ENCODE measurements at regions of chr13 and their contacts with region 1.

Region 1: DNA sequence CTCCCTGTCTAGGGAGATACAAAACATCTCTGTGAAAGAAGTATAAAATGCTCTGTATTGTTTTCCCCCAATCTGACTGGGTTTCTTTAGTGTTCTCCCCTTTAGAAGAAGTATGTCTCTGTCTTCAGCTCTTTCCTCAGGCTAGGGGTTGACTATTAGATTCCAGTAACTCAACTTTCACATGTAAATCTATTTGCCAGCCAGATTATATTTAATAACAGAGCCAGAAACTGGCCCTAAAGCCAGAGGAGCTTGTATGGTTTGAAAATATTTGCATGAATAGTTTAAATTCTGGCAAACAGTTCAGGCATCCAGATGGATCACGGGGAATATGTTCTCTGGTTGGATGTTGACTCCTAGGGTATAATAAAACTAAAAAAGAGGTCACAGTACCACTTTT is 22.3 kb upstream of the CYSLTR2 start:
- DNase-seq: no peak
- ATAC-seq: no peak
- H3K4me3 ChIP-seq: no peak overlapping the region
- H3K27ac ChIP-seq: peak overlapping the region in 8 of 12 donors; percentile 9 to 68 (median 48)
- H3K4me1 ChIP-seq: peaks cover 0 to 33% (median 6%) of the 10 kb centered on the region in 12 donors
- H3K27me3 ChIP-seq: no peaks in the 10 kb centered on the region
- CTCF ChIP-seq: no peak
- POLR2A ChIP-seq: no peak

Region 2: GRCh38 chr13:47829690-47830089 is 801.8 kb before region 1 on chr13:
- intact Hi-C with region 1: no loop called
- DNase-seq: no peak
- ATAC-seq: no peak
- H3K4me3 ChIP-seq: no peak overlapping the region
- H3K27ac ChIP-seq: no peak overlapping the region
- H3K4me1 ChIP-seq: peaks cover 0 to 3% (median 0%) of the 10 kb centered on the region in 12 donors
- H3K27me3 ChIP-seq: no peaks in the 10 kb centered on the region
- CTCF ChIP-seq: no peak
- POLR2A ChIP-seq: no peak

Region 3: GRCh38 chr13:48275507-48275906 is 355.9 kb before region 1 on chr13:
- intact Hi-C with region 1: no loop called
- DNase-seq: no peak
- ATAC-seq: no peak
- H3K4me3 ChIP-seq: no peak overlapping the region
- H3K27ac ChIP-seq: no peak overlapping the region
- H3K4me1 ChIP-seq: peaks cover 0 to 9% (median 0%) of the 10 kb centered on the region in 12 donors
- H3K27me3 ChIP-seq: no peaks in the 10 kb centered on the region
- CTCF ChIP-seq: no peak
- POLR2A ChIP-seq: no peak

Region 4: DNA sequence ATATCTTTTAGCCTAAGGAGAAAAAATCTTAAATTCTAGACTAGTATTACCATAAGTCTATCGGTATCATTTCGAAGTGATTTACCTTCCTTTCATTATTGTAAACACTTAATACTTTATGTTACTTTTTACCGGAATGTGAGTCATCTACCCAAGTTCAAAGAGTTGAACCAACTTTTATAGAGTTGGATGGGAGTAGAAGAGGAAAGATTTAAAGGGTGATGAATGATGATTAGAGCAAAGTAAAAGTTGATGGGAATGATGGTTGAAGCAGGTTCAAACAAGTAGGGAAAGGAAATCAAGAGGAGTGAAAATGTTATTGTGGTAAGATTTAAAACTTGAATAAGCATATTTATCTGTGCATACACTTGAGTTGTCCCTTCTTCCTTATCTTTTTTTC is 207.2 kb before region 1 on chr13:
- intact Hi-C with region 1: no loop called
- DNase-seq: no peak
- ATAC-seq: no peak
- H3K4me3 ChIP-seq: no peak overlapping the region
- H3K27ac ChIP-seq: no peak overlapping the region
- H3K4me1 ChIP-seq: peaks cover 0 to 13% (median 2%) of the 10 kb centered on the region in 12 donors
- H3K27me3 ChIP-seq: no peaks in the 10 kb centered on the region
- CTCF ChIP-seq: no peak
- POLR2A ChIP-seq: no peak

Region 5: DNA sequence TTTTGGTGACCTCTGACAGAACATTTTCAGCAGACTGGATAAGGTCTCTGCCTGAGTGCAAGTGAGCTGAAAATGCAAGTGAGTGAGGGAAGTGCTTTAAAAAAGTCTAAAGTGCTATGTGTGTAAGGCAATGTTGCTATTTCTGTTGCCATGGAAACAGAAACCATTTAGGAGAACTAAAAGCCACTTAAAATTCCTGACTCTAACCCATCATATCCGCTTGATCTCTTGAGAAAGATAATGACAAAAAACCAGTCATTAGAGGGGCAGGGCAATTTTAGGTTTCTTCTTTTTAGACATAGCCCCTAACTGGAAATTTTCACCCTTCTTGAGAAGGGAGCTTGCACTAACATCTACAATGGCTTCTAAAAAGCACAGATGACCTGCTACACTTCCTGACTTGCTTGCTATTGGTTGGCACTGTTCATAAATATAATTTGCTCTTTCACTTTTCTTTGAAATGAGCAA is 22.1 kb after region 1 on chr13 and contains the start of gene CYSLTR2:
- intact Hi-C with region 1: loop called in 1 of 10 experiments (anchors 2 kb)
- DNase-seq: peak in 1 of 5 donors; percentile 21
- ATAC-seq: peak in 3 of 4 donors; percentile 57 to 76 (median 57)
- H3K4me3 ChIP-seq: peak within 1 kb of the TSS in 10 of 12 donors; percentile 17 to 58 (median 48)
- H3K27ac ChIP-seq: peak within 1 kb of the TSS; percentile 26 to 86 (median 70)
- H3K4me1 ChIP-seq: peaks cover 0 to 53% (median 4%) of the 10 kb centered on the region in 12 donors
- H3K27me3 ChIP-seq: no peaks in the 10 kb centered on the region
- CTCF ChIP-seq: no peak
- POLR2A ChIP-seq: peak in 1 of 2 donors; percentile 17
- total RNA-seq, gene CYSLTR2: 3.8 to 11.5 (median 5.4) TPM

Region 6: DNA sequence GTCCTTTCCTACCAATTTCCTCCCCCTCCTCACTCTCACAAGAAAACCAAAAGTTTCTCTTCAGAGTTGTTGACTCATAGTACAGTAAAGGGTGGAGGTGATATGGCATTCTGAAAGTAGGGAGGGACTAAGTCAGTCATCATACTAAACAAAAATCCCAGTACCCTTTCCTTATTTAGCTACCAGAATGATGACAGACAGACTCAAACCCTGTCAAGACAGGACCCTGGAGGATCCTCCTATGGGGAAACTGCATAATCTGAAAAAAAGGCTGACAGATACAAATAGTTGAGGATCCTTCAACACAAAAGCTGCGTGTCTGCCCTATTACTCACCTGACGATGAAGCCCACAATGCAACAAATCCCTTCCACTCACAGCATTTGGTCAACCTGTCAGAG is 77.8 kb after region 1 on chr13:
- intact Hi-C with region 1: no loop called
- DNase-seq: no peak
- ATAC-seq: no peak
- H3K4me3 ChIP-seq: no peak overlapping the region
- H3K27ac ChIP-seq: no peak overlapping the region
- H3K4me1 ChIP-seq: no peaks in the 10 kb centered on the region
- H3K27me3 ChIP-seq: no peaks in the 10 kb centered on the region
- CTCF ChIP-seq: no peak
- POLR2A ChIP-seq: no peak